ENCODE measurements at regions of chr9 and their contacts with region 1.

Region 1: DNA sequence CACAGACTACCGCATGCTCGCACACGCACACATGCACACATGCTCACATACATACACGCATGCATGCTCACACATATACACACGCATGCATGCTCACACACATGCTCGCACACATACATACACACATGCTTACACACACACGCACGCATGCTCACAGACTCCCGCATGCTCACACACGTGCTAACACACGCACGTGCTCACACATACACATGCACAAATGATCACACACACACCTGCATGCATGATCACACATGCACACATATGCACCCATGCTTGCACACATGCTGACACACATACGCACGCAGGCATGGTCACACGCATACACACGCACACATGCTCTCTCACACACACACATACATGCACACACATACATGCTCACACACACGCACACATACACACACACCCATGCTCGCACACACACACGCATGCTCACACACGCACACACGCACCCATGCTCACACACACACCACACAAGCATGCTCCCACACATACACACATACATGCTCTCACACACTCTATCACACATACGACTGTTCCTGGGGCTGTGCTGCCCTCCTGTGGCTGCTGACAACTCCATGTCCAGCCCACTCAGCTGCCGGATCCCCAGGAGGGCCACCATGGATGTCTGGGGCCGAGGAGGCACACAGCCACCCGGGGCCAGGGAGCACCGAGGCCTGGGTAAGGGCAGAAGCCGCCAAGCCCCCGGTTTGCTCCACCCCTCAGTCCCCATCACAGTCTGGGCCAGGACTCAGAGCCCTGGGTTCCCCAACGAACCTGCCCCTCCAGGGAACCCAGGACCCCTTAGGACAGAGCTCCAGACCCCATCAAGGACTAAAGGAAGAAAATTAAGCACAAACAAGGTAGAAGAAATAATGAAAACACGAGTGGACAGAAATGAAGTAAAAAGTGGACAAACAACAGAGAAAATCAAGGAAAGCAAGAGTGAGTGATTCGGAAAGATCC is 31.4 kb upstream of the EGFL7 start:
- DNase-seq: peak in 1 of 2 donors; percentile 96
- H3K4me3 ChIP-seq: no peak overlapping the region
- CTCF ChIP-seq: no peak
- POLR2A ChIP-seq: no peak

Region 2: GRCh38 chr9:136485049-136486045 is 146.0 kb before region 1 on chr9:
- intact Hi-C with region 1: loop called (anchors 2 kb)
- DNase-seq: peak; percentile 82 to 97
- H3K4me3 ChIP-seq: no peak overlapping the region
- CTCF ChIP-seq: peak in 1 of 3 donors; percentile 77
- POLR2A ChIP-seq: no peak

Region 3: GRCh38 chr9:136539427-136540421 is 91.6 kb before region 1 on chr9:
- intact Hi-C with region 1: loop called (anchors 5 kb)
- DNase-seq: peak; percentile 93 to 98
- H3K4me3 ChIP-seq: no peak overlapping the region
- CTCF ChIP-seq: no peak
- POLR2A ChIP-seq: no peak

Region 4: GRCh38 chr9:137266162-137266527 is 634.8 kb after region 1 on chr9:
- intact Hi-C with region 1: no loop called
- DNase-seq: no peak
- H3K4me3 ChIP-seq: no peak overlapping the region
- CTCF ChIP-seq: no peak
- POLR2A ChIP-seq: no peak

Measured in lower leg skin (tissue), 4 donors.